Heart right ventricle (tissue), 16 donors: ENCODE measurements at regions of chrX and their contacts with region 1.

Region 1: GRCh38 chrX:120365320-120365719 is 3.4 kb downstream of the ATP1B4 start:
- DNase-seq: peak; percentile 29 to 38
- ATAC-seq: peak in 5 of 8 donors; percentile 50 to 79 (median 62)
- H3K4me3 ChIP-seq: no peak overlapping the region
- H3K27ac ChIP-seq: peak overlapping the region in 2 of 10 donors; percentile 5 to 31
- H3K4me1 ChIP-seq: peaks cover 0 to 16% (median 0%) of the 10 kb centered on the region in 9 donors
- H3K27me3 ChIP-seq: peaks cover 0 to 28% (median 0%) of the 10 kb centered on the region in 7 donors
- CTCF ChIP-seq: peak in 7 of 9 donors; percentile 35 to 54 (median 44)

Region 2: DNA sequence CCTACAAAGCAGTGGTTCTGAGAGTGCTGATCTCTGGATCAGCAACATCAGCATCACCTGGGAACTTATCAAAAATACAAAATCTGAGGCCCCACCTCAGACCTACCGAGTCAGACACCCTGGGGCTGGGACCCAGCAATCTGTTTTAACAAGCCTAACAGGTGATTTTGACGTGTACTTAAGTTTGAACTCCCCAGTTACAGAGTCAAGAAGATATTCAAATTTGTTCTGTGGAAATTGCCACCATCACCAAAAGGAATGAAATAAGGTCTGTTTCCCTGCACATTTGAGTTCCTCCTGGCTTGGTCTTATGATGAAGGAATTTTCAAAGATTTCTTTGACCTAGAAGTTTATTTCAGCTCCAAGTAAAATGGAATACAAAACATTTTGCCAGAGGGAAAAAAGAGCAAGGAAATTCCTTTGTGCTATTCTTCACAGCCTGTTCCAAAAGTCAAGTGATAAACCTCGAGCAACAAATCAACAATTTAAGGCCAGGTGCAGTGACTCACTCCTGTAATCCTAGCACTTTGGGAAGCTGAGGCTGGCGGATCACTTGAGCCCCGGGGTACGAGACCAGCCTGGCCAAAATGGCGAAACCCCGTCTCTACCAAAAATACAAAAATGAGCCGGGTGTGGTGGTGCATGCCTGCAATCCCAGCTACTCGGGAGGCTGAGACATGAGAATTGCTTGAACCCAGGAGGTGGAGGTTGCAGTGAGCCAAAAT is 762.6 kb before region 1 on chrX:
- intact Hi-C with region 1: no loop called
- DNase-seq: no peak
- ATAC-seq: no peak
- H3K4me3 ChIP-seq: no peak overlapping the region
- H3K27ac ChIP-seq: no peak overlapping the region
- H3K4me1 ChIP-seq: peaks cover 0 to 8% (median 0%) of the 10 kb centered on the region in 9 donors
- H3K27me3 ChIP-seq: no peaks in the 10 kb centered on the region
- CTCF ChIP-seq: no peak

Region 3: GRCh38 chrX:120457766-120458180 is 92.5 kb after region 1 on chrX:
- intact Hi-C with region 1: loop called in 2 of 10 experiments (anchors 10 kb)
- DNase-seq: no peak
- ATAC-seq: peak in 1 of 8 donors; percentile 22
- H3K4me3 ChIP-seq: no peak overlapping the region
- H3K27ac ChIP-seq: peak overlapping the region in 1 of 10 donors; percentile 60
- H3K4me1 ChIP-seq: peaks cover 0 to 45% (median 12%) of the 10 kb centered on the region in 9 donors
- H3K27me3 ChIP-seq: no peaks in the 10 kb centered on the region
- CTCF ChIP-seq: no peak

Region 4: DNA sequence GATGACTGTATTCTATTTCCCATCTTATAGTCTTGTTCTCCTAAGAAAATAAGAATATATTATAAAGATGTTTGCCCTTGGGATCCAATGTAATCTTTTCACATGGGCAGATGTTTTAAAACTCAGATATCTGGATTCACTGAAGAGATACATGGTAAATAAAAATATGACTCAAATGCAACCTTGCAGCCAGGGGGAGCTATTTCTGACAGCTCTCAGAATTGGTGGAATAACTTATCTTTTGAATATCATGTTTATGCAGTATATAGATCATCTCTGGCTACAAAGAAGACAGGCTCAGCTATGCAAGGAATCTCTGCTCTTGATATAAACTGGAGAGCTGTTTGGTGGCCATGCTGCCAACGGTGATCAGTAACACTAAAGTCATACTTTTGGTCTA is 956.8 kb after region 1 on chrX:
- intact Hi-C with region 1: no loop called
- DNase-seq: no peak
- ATAC-seq: no peak
- H3K4me3 ChIP-seq: no peak overlapping the region
- H3K27ac ChIP-seq: no peak overlapping the region
- H3K4me1 ChIP-seq: no peaks in the 10 kb centered on the region
- H3K27me3 ChIP-seq: no peaks in the 10 kb centered on the region
- CTCF ChIP-seq: peak in 1 of 9 donors; percentile 17